BJ (cell line): ENCODE measurements at regions of chr13 and their contacts with region 1.

Region 1: DNA sequence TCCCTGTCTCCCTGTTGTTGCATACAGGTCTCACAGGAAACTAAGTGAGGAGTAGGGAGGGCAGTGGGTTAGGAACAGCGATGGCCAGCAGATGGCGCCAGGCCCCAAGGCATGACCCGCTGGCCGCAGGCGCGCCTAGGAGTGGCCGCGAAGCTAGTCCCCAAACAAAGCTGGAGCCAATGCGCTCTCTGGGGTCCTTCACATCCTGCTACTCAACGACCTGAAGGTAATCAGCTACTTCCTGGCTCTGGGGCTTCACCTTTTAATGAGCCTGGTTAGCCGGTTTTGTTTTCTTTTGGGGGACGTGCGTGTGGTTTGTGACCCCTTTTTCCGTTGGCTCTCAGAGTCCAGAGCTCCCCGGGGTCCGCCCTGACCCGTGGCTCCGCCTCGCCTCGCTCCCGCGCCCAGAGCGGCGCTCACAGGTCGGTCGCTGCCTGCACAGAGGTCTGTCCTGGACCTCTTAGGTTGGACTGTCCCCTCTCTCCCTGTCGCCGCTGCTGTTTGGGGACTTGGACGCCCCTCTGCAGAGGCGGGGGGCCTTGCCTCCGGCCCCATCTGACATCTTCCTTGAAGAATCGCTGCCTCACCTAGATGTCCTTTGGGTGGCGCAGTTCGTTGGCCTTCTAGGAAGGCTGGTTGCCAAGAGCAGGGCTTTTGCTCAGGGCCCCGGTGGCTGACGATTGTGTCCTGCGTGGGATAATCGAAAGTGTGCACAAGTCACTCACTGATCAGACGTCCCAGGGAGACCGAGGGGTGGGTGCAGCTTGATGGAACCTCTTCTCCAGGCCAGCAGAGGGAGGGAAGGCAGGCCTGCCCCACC is 62.1 kb upstream of the GTF3A start:
- DNase-seq: no peak
- H3K4me3 ChIP-seq: peak overlapping the region; percentile 40
- H3K27me3 ChIP-seq: peaks cover 7% of the 10 kb centered on the region; the same call in 1 of the 2 replicates
- CTCF ChIP-seq: peak; percentile 98

Region 2: GRCh38 chr13:26497968-26498511 is 864.2 kb before region 1 on chr13:
- CTCF ChIA-PET with region 1: no interaction called
- POLR2A ChIA-PET with region 1: no interaction called
- DNase-seq: peak; percentile 62
- H3K4me3 ChIP-seq: no peak overlapping the region
- H3K27me3 ChIP-seq: no peaks in the 10 kb centered on the region
- CTCF ChIP-seq: no peak

Region 3: DNA sequence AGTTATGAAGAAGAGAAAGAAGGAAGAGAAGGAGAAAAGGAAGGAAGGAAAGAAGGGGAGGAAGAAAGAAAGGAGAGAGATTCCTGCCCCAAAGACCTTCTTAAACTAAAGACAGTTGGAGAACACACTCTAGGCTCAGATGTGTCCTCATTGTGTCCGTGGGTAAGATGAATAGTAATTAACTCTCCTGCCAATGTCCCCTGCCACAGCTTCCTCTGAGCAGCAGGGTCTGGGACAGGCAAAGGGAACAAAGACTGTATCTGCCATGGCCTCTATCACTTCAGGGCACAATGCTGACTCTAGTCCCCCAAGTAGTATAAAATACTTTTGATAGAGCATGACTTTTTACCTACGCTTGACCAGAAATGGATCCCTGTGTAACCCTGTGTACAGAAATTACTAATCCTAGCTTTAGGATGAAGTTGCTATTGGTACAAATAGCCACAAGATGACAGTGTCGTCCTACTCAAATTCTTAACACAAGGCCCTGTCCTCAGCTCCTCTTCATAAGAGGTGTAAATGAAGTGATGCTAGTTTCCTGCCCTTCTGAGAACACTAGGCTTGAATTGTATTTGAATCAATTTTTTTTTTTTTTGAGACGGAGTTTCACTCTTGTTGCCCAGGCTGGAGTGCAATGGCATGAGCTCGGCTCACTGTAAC is 415.5 kb before region 1 on chr13:
- CTCF ChIA-PET with region 1: interaction called, 136 read pairs
- POLR2A ChIA-PET with region 1: no interaction called
- DNase-seq: no peak
- H3K4me3 ChIP-seq: no peak overlapping the region
- H3K27me3 ChIP-seq: 0 out of 2 replicates have a peak, but pooled peaks cover 1% of the 10 kb centered on the region
- CTCF ChIP-seq: peak; percentile 80

Region 4: GRCh38 chr13:26977556-26977955 is 384.7 kb before region 1 on chr13:
- CTCF ChIA-PET with region 1: interaction called, 227 read pairs
- POLR2A ChIA-PET with region 1: no interaction called
- DNase-seq: no peak
- H3K4me3 ChIP-seq: no peak overlapping the region
- H3K27me3 ChIP-seq: peaks cover 1% of the 10 kb centered on the region; the same call in 1 of the 2 replicates
- CTCF ChIP-seq: no peak

Region 5: GRCh38 chr13:27283906-27284493 is 78.3 kb before region 1 on chr13:
- CTCF ChIA-PET with region 1: interaction called, 16 read pairs
- POLR2A ChIA-PET with region 1: interaction called, 14 read pairs
- DNase-seq: no peak
- H3K4me3 ChIP-seq: no peak overlapping the region
- H3K27me3 ChIP-seq: 0 out of 2 replicates have a peak, but pooled peaks cover 1% of the 10 kb centered on the region
- CTCF ChIP-seq: peak; percentile 57

Region 6: DNA sequence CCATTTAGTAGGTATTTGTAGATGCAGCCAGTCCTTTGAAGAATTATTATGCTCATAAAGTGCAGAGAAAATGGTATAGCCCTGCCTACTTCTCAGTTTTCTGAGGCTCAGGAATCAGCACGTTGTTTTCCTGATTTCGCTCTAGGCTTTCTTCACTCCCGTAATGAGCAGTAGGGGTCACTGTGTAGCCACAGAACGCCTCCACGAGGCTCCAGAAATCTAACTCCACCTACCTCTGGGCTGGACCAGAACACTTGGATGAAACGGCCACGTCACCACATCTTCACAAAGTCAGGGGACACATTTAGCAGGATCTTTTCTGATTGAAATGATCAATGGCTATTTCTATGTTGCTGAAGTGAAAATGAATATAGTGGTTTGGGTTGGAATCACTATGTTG is 12.4 kb after region 1 on chr13:
- CTCF ChIA-PET with region 1: interaction called, 82 read pairs
- POLR2A ChIA-PET with region 1: no interaction called
- DNase-seq: peak; percentile 26
- H3K4me3 ChIP-seq: no peak overlapping the region
- H3K27me3 ChIP-seq: peaks cover 9% of the 10 kb centered on the region
- CTCF ChIP-seq: peak; percentile 83

Region 7: GRCh38 chr13:27953676-27954405 is 591.6 kb after region 1 on chr13:
- CTCF ChIA-PET with region 1: interaction called, 16 read pairs
- POLR2A ChIA-PET with region 1: no interaction called
- DNase-seq: no peak
- H3K4me3 ChIP-seq: peak overlapping the region; percentile 43
- H3K27me3 ChIP-seq: peaks cover 13% of the 10 kb centered on the region
- CTCF ChIP-seq: peak; percentile 55